PC-9 (cell line): ENCODE measurements at regions of chr2 and their contacts with region 1.

Region 1: DNA sequence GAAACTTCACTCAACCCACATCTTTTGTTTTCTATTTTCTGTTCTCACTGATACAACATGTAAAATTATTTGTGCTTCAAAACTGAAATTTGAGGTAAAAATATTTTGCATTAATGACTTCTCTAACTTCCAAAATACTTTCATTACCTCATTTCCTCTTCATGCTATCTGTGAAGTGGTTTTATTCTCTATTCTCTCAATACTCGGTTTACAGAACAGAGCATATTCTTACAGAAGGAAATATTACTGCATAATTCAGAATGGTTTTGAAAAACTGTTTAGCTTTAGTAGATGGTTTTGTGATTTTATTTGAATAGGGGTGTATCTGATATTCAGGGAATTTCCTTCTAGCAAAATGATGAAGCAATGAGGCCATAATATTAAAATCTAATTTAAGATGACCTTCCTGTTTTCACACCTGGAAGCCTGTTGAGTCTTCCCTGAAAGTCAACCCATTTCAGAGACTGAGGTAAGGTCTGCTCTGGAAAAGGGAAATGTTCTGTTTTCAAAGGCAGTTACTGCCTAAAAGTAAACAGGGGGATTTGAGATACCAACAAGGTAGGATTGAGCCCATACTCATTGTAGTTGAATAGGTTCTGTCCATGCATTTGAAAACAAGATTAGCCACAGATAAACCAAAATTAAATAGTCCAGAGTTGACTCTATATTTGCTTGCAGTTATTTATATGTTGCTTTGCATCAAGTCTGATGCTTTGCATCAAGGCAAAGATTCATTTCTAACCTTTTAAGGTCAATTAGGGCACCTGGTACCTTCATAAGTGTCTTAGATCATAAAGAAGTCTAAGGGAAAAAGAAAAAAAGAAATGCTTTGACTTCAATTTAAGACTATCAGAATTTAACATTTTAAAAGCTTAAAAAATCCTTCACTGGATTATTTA is 50.8 kb upstream of the PEX13 start:
- DNase-seq: no peak
- H3K4me3 ChIP-seq: no peak overlapping the region
- H3K27ac ChIP-seq: no peak overlapping the region
- H3K4me1 ChIP-seq: peaks cover 39% of the 10 kb centered on the region
- H3K27me3 ChIP-seq: no peaks in the 10 kb centered on the region
- CTCF ChIP-seq: no peak

Region 2: GRCh38 chr2:60385648-60386047 is 581.1 kb before region 1 on chr2:
- CTCF ChIA-PET with region 1: interaction called, 11 read pairs
- POLR2A ChIA-PET with region 1: no interaction called
- intact Hi-C with region 1: no loop called
- DNase-seq: no peak
- H3K4me3 ChIP-seq: no peak overlapping the region
- H3K27ac ChIP-seq: no peak overlapping the region
- H3K4me1 ChIP-seq: no peaks in the 10 kb centered on the region
- H3K27me3 ChIP-seq: peaks cover 83% of the 10 kb centered on the region
- CTCF ChIP-seq: no peak

Region 3: DNA sequence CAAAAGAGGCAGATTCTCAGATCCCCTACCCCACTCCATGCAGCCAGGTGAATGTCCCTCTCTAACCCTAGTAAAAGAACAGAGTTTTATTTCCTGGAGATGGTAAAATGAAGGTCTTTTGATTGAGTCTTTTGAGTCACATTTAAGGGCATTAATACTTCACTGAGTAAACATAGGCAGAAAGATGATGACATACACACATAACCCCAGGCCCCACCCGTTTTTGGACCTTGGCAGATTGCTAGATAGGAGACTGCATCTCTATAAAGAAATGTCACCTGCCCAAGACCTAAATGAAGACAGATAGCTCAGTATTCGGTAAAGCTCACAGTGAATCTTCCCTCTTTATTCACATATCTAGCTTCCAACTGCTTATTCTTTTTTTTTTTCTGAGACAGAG is 22.5 kb after region 1 on chr2:
- CTCF ChIA-PET with region 1: no interaction called
- POLR2A ChIA-PET with region 1: no interaction called
- intact Hi-C with region 1: no loop called
- DNase-seq: peak in 1 of 2 experiments; percentile 43
- H3K4me3 ChIP-seq: no peak overlapping the region
- H3K27ac ChIP-seq: 0 out of 2 replicates have a peak overlapping the region, but pooled peaks have one; percentile 9
- H3K4me1 ChIP-seq: peaks cover 11% of the 10 kb centered on the region
- H3K27me3 ChIP-seq: no peaks in the 10 kb centered on the region
- CTCF ChIP-seq: no peak

Region 4: GRCh38 chr2:61006486-61007105 is 39.8 kb after region 1 on chr2:
- CTCF ChIA-PET with region 1: interaction called, 13 read pairs
- POLR2A ChIA-PET with region 1: no interaction called
- intact Hi-C with region 1: no loop called
- DNase-seq: peak in 1 of 2 experiments; percentile 81
- H3K4me3 ChIP-seq: no peak overlapping the region
- H3K27ac ChIP-seq: peak overlapping the region; percentile 83
- H3K4me1 ChIP-seq: peaks cover 41% of the 10 kb centered on the region
- H3K27me3 ChIP-seq: no peaks in the 10 kb centered on the region
- CTCF ChIP-seq: no peak